ENCODE measurements at regions of chr9 and their contacts with region 1.

Region 1: DNA sequence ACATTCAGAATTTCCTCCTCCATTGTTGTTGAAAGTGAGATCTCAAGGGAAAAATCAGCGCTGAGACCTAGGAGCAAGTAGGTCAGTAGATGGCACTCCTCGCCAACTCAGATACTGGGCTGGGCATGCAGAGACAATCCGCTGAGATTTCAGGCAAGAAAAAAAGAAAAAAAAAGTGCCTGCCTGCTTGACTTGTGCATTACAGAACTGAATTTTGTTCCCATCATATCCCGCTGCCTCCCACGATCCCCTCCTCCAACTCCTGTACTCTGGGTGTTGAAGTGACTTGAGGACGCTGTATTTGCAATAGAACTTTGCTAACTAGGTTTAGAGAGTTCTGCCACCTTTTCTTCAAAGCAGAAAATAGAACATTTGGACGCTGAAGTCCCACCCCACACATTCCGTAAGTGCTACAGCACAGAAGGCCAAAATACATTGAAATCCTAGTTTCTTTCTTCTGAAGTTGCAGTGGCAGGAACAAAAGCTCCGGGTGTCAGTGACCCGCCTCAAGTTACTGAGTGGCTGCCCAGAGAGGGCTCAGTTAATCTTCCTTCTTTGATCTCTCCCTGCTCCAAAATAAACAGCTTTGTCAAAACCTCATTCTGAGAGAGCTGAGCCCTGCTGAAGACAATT is 265.8 kb downstream of the MLLT3 start:
- DNase-seq: peak; percentile 55 to 92 (median 77)

Region 2: GRCh38 chr9:20437476-20437875 is 81.0 kb after region 1 on chr9:
- intact Hi-C with region 1: no loop called
- DNase-seq: no peak

Region 3: GRCh38 chr9:20582150-20582549 is 225.6 kb after region 1 on chr9:
- intact Hi-C with region 1: no loop called
- DNase-seq: no peak

Region 4: DNA sequence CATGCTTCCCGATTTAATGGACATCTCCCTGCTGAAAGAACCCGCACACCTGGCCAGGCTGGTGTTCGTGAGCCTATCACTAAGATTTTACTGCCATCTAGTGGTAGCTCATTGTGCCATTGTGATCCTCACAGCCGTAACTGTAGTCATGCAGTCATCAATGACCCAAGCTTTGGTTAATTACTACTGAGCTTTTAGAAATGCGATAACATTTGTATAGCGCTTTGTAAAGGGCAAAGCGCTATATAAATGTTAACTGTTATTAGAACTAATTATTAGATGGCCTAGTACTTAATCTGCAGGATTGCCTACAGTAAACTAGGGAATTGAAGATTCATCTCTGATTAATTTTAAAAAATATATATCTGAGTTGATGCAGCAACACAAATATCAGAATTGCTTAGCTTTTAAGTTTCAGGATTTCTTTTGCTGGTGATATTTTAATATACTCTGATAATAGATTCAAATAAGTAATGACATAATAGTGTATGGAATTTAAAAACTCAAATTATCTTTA is 584.7 kb after region 1 on chr9:
- intact Hi-C with region 1: loop called (anchors 5 kb)
- DNase-seq: peak in 39 of 42 donors; percentile 7 to 84 (median 50)

Measured in head of caudate nucleus (tissue), 42 donors.